ENCODE measurements at regions of chr3 and their contacts with region 1.

Region 1: GRCh38 chr3:134299185-134299887 is 48.7 kb upstream of the RYK start:
- DNase-seq: no peak
- ATAC-seq: peak; percentile 76
- H3K4me3 Mint-ChIP-seq: no peak overlapping the region
- H3K27ac Mint-ChIP-seq: no peak overlapping the region
- H3K4me1 Mint-ChIP-seq: peaks cover 2% of the 10 kb centered on the region; the same call in 1 of the 2 replicates
- H3K27me3 Mint-ChIP-seq: no peaks in the 10 kb centered on the region
- CTCF ChIP-seq: no peak

Region 2: DNA sequence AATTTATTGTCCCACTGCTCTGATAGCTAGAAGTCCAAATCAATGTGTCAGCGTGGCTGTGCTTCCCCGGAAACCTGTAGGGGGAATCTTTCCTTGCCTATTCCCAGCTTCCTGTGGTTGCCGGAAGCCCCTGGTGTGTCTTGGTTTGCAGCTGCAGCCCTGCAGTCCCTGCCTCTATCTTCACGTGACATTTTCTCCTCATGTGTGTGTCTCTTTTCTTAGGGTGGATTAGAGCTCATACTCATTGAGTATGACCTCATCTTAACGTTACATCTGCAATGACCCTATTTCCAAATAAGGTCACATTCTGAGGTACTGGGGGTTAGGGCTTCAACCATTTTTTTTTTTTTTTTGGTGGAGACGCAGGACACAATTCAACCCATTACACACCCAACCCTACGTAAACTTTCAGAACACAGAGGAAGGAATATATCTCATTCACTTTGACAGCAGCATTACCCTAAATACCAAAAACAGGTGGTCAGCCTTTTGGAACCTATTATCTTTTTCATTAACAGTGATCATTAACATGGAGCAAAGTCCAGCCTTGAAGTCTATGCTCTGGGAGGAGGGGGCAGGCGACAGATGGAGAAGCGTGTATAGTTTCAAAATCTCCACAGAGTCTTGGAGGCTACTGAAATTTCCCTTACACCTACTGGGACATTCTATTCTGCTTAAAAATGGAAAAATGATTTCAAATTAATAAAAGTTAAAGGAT is 137.3 kb before region 1 on chr3:
- CTCF ChIA-PET with region 1: interaction called, 10 read pairs
- POLR2A ChIA-PET with region 1: no interaction called
- DNase-seq: peak; percentile 45
- ATAC-seq: peak; percentile 96
- H3K4me3 Mint-ChIP-seq: no peak overlapping the region
- H3K27ac Mint-ChIP-seq: peak overlapping the region; percentile 33; the same call in 1 of the 2 replicates
- H3K4me1 Mint-ChIP-seq: peaks cover 12% of the 10 kb centered on the region; the same call in 1 of the 2 replicates
- H3K27me3 Mint-ChIP-seq: no peaks in the 10 kb centered on the region
- CTCF ChIP-seq: no peak

Region 3: DNA sequence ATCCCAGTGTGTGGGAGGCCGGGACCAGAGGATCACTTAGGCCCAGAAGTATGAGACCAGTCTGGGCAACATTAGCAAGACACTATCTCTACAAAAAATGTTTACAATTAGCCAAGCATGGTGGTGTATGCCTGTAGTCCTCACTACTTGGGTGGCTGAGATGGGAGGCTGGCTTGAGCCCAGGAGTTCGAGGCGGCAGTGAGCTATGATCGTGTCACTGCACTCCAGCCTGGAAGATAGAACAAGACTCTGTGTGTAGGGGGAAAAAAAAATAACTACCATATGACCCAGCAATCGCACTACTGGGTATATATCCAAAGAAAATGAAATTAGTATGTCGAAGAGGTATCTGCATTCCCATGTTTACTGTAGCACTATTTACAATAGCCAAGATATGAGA is 71.3 kb before region 1 on chr3:
- CTCF ChIA-PET with region 1: interaction called, 11 read pairs
- POLR2A ChIA-PET with region 1: no interaction called
- DNase-seq: no peak
- ATAC-seq: no peak
- H3K4me3 Mint-ChIP-seq: no peak overlapping the region
- H3K27ac Mint-ChIP-seq: peak overlapping the region; percentile 46; the same call in 1 of the 2 replicates
- H3K4me1 Mint-ChIP-seq: peaks cover 52% of the 10 kb centered on the region
- H3K27me3 Mint-ChIP-seq: no peaks in the 10 kb centered on the region
- CTCF ChIP-seq: no peak